ENCODE measurements at regions of chr9 and their contacts with region 1.

Region 1: DNA sequence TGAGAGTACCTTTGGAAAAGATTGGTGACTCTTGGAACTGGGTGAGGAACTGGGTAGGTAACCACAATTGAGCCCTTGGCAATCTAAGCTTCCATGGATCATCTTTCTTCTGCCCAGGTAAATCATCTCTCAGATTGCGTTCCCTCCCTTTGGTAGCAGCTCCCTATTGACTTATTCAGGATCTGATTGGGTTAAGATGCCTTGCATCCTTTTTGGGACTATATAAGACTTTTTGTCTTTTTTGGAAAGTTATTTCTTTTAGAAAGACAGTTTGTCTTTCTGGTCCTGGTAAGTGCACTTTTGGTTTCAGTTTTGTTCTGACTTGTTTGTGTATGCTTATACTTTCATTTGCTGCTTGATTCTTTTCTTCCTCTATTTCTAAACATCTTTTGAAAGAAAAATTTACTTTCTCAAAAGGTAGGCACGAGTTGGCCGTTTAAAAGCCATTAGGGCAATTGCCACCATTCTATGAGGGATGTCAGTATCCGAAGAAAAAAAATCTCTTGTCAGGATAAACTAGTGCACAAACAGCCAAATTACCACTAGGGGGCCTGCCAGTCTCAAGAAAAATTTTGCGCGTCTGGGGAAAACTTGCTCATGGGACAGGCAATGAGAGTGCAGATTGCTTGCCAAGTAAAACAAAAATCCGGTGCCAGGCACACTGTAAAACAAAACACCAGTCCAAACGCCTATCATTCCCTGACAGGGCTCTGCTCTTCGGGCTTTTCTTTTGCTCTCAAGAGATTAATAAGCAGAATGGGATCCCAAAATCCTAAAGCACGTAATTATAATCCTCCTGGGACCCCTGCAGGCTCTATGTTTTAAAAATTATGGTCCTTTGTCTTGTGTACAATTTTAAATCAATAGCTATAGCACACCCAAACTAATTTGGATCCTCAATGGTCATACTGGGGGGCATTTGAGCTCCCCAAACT is 12.8 kb downstream of the OR1J1 start:
- DNase-seq: peak; percentile 83
- ATAC-seq: peak; percentile 80
- H3K4me3 ChIP-seq: peak overlapping the region; percentile 38 to 81 (median 59)
- H3K4me3 Mint-ChIP-seq: peak overlapping the region; percentile 93
- H3K27ac ChIP-seq: peak overlapping the region; percentile 35 to 57
- H3K27ac Mint-ChIP-seq: peak overlapping the region; percentile 86
- H3K4me1 ChIP-seq: peaks cover 6 to 13% of the 10 kb centered on the region in 2 donors
- H3K4me1 Mint-ChIP-seq: peaks cover 13% of the 10 kb centered on the region
- H3K27me3 ChIP-seq: peaks cover 0 to 10% (median 8%) of the 10 kb centered on the region in 4 experiments
- H3K27me3 Mint-ChIP-seq: peaks cover 47% of the 10 kb centered on the region
- CTCF ChIP-seq: peak; percentile 89

Region 2: GRCh38 chr9:122092611-122093506 is 372.0 kb before region 1 on chr9 and contains the start of gene TTLL11:
- CTCF ChIA-PET with region 1: interaction called, 3 read pairs
- POLR2A ChIA-PET with region 1: interaction called, 3 read pairs
- intact Hi-C with region 1: loop called (anchors 1 kb)
- DNase-seq: peak; percentile 97
- ATAC-seq: peak; percentile 94
- H3K4me3 ChIP-seq: peak within 1 kb of the TSS; percentile 46 to 78 (median 77)
- H3K4me3 Mint-ChIP-seq: peak within 1 kb of the TSS; percentile 90
- H3K27ac ChIP-seq: peak within 1 kb of the TSS in 1 of 2 donors; percentile 60
- H3K27ac Mint-ChIP-seq: peak within 1 kb of the TSS; percentile 33
- H3K4me1 ChIP-seq: peaks cover 24 to 29% of the 10 kb centered on the region in 2 donors
- H3K4me1 Mint-ChIP-seq: peaks cover 45% of the 10 kb centered on the region
- H3K27me3 ChIP-seq: no peaks in the 10 kb centered on the region
- H3K27me3 Mint-ChIP-seq: peaks cover 9% of the 10 kb centered on the region
- CTCF ChIP-seq: no peak
- total RNA-seq, gene TTLL11: 3.8 and 3.9 TPM in 2 replicates

Region 3: GRCh38 chr9:122099271-122099869 is 365.5 kb before region 1 on chr9:
- CTCF ChIA-PET with region 1: interaction called, 10 read pairs
- POLR2A ChIA-PET with region 1: interaction called, 3 read pairs
- intact Hi-C with region 1: no loop called
- DNase-seq: peak; percentile 85
- ATAC-seq: peak; percentile 87
- H3K4me3 ChIP-seq: no peak overlapping the region
- H3K4me3 Mint-ChIP-seq: peak overlapping the region; percentile 30
- H3K27ac ChIP-seq: no peak overlapping the region
- H3K27ac Mint-ChIP-seq: no peak overlapping the region
- H3K4me1 ChIP-seq: peaks cover 10 to 11% of the 10 kb centered on the region in 2 donors
- H3K4me1 Mint-ChIP-seq: peaks cover 12% of the 10 kb centered on the region
- H3K27me3 ChIP-seq: peaks cover 0 to 7% (median 3%) of the 10 kb centered on the region in 4 experiments
- H3K27me3 Mint-ChIP-seq: peaks cover 12% of the 10 kb centered on the region
- CTCF ChIP-seq: peak; percentile 88

Region 4: DNA sequence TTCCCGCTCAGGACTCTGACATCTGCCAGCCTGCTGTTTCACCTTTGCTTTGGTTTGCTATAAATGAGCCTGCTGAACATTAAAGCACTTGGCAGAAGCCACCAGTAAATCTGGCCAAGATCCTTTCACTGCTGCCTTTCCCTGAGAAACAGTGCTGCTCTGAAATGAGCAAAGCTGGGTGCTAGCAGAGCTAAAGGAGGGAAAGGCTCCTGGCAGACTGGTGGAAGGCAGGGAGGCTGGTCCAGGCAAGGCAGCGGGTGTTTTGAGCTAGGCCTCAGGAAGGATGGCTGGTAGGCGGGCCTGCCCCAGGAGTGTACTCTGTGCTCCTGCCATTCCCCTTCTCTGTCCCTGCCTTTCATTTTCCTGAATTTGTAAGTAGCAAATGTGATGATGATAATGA is 146.6 kb before region 1 on chr9:
- CTCF ChIA-PET with region 1: no interaction called
- POLR2A ChIA-PET with region 1: no interaction called
- intact Hi-C with region 1: no loop called
- DNase-seq: no peak
- ATAC-seq: no peak
- H3K4me3 ChIP-seq: no peak overlapping the region
- H3K4me3 Mint-ChIP-seq: no peak overlapping the region
- H3K27ac ChIP-seq: no peak overlapping the region
- H3K27ac Mint-ChIP-seq: peak overlapping the region; percentile 15
- H3K4me1 ChIP-seq: peaks cover 8 to 12% of the 10 kb centered on the region in 2 donors
- H3K4me1 Mint-ChIP-seq: peaks cover 12% of the 10 kb centered on the region
- H3K27me3 ChIP-seq: no peaks in the 10 kb centered on the region
- H3K27me3 Mint-ChIP-seq: no peaks in the 10 kb centered on the region
- CTCF ChIP-seq: no peak

Region 5: DNA sequence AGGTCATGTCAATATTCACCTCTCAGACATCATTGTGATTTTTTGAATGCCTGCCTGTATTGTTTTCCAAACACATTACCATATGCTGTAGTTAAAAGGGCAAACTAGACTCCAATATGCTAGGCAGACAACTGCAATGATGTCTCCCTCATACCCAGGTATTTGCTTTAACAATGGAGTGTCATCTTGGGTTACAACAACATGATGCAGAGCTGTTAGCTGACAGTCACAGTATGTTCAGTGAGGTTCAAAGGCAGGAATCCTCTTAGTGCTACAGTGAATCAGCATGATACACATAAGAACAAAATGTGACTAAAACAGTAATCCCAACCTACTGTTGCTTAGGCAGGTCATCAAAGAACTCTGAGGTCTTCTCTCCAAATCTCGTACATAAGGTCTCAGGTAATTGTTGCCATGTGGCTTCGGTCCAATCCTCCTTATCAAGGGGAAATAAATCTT is 11.2 kb before region 1 on chr9:
- CTCF ChIA-PET with region 1: interaction called, 30 read pairs
- POLR2A ChIA-PET with region 1: no interaction called
- intact Hi-C with region 1: no loop called
- DNase-seq: no peak
- ATAC-seq: no peak
- H3K4me3 ChIP-seq: no peak overlapping the region
- H3K4me3 Mint-ChIP-seq: no peak overlapping the region
- H3K27ac ChIP-seq: no peak overlapping the region
- H3K27ac Mint-ChIP-seq: no peak overlapping the region
- H3K4me1 ChIP-seq: no peaks in the 10 kb centered on the region
- H3K4me1 Mint-ChIP-seq: no peaks in the 10 kb centered on the region
- H3K27me3 ChIP-seq: peaks cover 0 to 4% (median 0%) of the 10 kb centered on the region in 4 experiments
- H3K27me3 Mint-ChIP-seq: peaks cover 22% of the 10 kb centered on the region
- CTCF ChIP-seq: no peak

Region 6: DNA sequence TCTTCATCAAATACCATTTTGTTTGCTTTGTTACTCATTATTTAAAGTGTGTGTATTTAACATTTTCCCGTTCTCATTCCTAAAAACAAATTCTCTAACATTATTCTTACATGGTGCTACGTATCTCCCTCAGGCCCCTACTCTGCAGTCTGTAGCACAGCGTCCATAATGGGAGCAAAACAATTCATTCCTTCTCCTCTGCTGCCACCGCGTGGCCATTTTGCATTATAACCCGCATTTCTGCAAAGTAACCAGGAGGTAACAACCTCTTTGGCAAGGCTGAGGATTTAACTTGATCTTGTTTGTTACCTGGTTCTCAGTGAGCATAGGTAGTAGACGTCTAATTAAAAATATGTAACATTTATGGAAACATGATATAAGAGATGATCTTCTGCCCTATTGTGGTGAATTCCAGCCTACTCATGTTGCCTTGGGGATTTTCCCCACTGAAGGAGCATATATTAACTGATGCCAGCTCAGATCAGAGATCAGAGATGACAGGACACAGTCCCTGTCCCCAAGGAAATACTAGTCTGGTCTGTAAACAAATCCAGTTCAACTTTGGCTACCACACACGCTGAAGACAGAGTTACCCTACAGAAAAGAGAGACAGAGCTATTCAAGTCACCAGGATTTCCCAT is 345.5 kb after region 1 on chr9:
- CTCF ChIA-PET with region 1: interaction called, 58 read pairs
- POLR2A ChIA-PET with region 1: no interaction called
- intact Hi-C with region 1: loop called (anchors 1 kb)
- DNase-seq: peak; percentile 82
- ATAC-seq: peak; percentile 91
- H3K4me3 ChIP-seq: no peak overlapping the region
- H3K4me3 Mint-ChIP-seq: no peak overlapping the region
- H3K27ac ChIP-seq: no peak overlapping the region
- H3K27ac Mint-ChIP-seq: no peak overlapping the region
- H3K4me1 ChIP-seq: peaks cover 5 to 8% of the 10 kb centered on the region in 2 donors
- H3K4me1 Mint-ChIP-seq: peaks cover 8% of the 10 kb centered on the region
- H3K27me3 ChIP-seq: no peaks in the 10 kb centered on the region
- H3K27me3 Mint-ChIP-seq: no peaks in the 10 kb centered on the region
- CTCF ChIP-seq: peak; percentile 88

Region 7: DNA sequence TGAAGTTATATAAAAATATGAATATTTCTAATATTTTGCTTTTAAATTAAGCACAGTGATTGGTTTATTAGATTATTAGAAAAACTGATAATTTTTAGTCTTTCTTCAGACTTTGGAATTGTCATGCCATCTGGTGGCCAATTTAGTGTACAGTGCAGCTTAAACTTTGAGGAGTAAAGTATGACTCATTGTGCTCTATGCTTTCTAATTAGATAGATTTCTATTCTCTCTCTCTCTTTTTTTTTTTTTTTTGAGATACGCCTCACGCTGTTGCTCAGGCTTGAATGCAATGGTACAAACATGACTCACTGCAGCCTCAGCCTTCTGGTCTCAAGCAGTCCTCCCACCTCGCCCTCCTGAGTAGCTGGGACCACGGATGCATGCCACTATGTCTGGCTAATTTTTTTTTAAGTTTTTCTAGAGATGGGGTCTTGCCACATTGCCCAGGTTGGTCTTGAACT is 526.5 kb after region 1 on chr9:
- CTCF ChIA-PET with region 1: interaction called, 11 read pairs
- POLR2A ChIA-PET with region 1: no interaction called
- intact Hi-C with region 1: no loop called
- DNase-seq: peak; percentile 52
- ATAC-seq: peak; percentile 58
- H3K4me3 ChIP-seq: no peak overlapping the region
- H3K4me3 Mint-ChIP-seq: no peak overlapping the region
- H3K27ac ChIP-seq: no peak overlapping the region
- H3K27ac Mint-ChIP-seq: no peak overlapping the region
- H3K4me1 ChIP-seq: no peaks in the 10 kb centered on the region
- H3K4me1 Mint-ChIP-seq: peaks cover 3% of the 10 kb centered on the region
- H3K27me3 ChIP-seq: no peaks in the 10 kb centered on the region
- H3K27me3 Mint-ChIP-seq: no peaks in the 10 kb centered on the region
- CTCF ChIP-seq: peak; percentile 81